Right cardiac atrium (tissue), 5 donors: ENCODE measurements at regions of chr4 and their contacts with region 1.

Region 1: GRCh38 chr4:158821228-158821971 is 52.6 kb downstream of the FNIP2 start:
- DNase-seq: no peak
- ATAC-seq: no peak
- H3K4me3 ChIP-seq: no peak overlapping the region
- H3K27ac ChIP-seq: no peak overlapping the region
- H3K4me1 ChIP-seq: peaks cover 33% of the 10 kb centered on the region
- H3K27me3 ChIP-seq: no peaks in the 10 kb centered on the region

Region 2: DNA sequence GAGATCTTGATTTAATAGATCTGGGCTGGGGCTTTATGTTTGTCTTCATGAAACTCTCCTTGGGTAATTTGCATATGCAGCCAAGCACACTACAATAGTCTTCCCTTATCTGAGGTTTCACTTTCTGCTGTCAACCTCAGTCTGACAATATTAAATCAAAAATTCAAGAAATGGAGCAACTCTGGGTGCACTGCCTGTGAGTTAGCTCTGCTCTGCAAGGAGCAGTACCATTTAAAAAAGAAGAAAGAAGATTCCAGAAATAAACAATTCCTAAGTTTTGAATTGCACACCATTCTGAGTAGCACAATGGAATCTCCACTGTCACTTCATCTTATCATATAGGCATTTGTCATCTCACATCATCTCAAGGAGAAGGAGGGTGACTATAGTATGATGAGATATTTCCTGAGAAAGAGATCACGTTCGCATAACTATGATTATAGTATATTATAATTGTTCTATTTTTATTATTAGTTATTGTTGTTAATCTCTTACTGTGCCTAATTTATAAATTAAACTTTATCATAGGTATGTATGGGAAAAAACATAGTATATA is 43.2 kb before region 1 on chr4:
- intact Hi-C with region 1: loop called in 1 of 4 experiments (anchors 10 kb)
- DNase-seq: no peak
- ATAC-seq: no peak
- H3K4me3 ChIP-seq: no peak overlapping the region
- H3K27ac ChIP-seq: no peak overlapping the region
- H3K4me1 ChIP-seq: peaks cover 15% of the 10 kb centered on the region
- H3K27me3 ChIP-seq: no peaks in the 10 kb centered on the region